CD8-positive, alpha-beta T cell (primary cell): ENCODE measurements at regions of chr10 and their contacts with region 1.

Region 1: GRCh38 chr10:11557513-11557912 is 53.9 kb downstream of the USP6NL start:
- DNase-seq: no peak
- ATAC-seq: no peak
- H3K4me3 ChIP-seq: no peak overlapping the region
- H3K4me3 Mint-ChIP-seq: no peak overlapping the region
- H3K27ac ChIP-seq: no peak overlapping the region
- H3K27ac Mint-ChIP-seq: no peak overlapping the region
- H3K4me1 ChIP-seq: no peaks in the 10 kb centered on the region
- H3K4me1 Mint-ChIP-seq: peaks cover 12% of the 10 kb centered on the region
- H3K27me3 ChIP-seq: no peaks in the 10 kb centered on the region
- H3K27me3 Mint-ChIP-seq: no peaks in the 10 kb centered on the region
- CTCF ChIP-seq: no peak

Region 2: GRCh38 chr10:11397980-11398580 is 159.4 kb before region 1 on chr10:
- CTCF ChIA-PET with region 1: no interaction called
- POLR2A ChIA-PET with region 1: no interaction called
- intact Hi-C with region 1: no loop called
- DNase-seq: no peak
- ATAC-seq: no peak
- H3K4me3 ChIP-seq: no peak overlapping the region
- H3K4me3 Mint-ChIP-seq: no peak overlapping the region
- H3K27ac ChIP-seq: no peak overlapping the region
- H3K27ac Mint-ChIP-seq: no peak overlapping the region
- H3K4me1 ChIP-seq: peaks cover 30% of the 10 kb centered on the region
- H3K4me1 Mint-ChIP-seq: peaks cover 57% of the 10 kb centered on the region
- H3K27me3 ChIP-seq: no peaks in the 10 kb centered on the region
- H3K27me3 Mint-ChIP-seq: no peaks in the 10 kb centered on the region
- CTCF ChIP-seq: no peak

Region 3: GRCh38 chr10:11581213-11581612 is 23.7 kb after region 1 on chr10:
- CTCF ChIA-PET with region 1: no interaction called
- POLR2A ChIA-PET with region 1: no interaction called
- intact Hi-C with region 1: no loop called
- DNase-seq: no peak
- ATAC-seq: no peak
- H3K4me3 ChIP-seq: no peak overlapping the region
- H3K4me3 Mint-ChIP-seq: no peak overlapping the region
- H3K27ac ChIP-seq: no peak overlapping the region
- H3K27ac Mint-ChIP-seq: no peak overlapping the region
- H3K4me1 ChIP-seq: peaks cover 10% of the 10 kb centered on the region
- H3K4me1 Mint-ChIP-seq: peaks cover 25% of the 10 kb centered on the region
- H3K27me3 ChIP-seq: no peaks in the 10 kb centered on the region
- H3K27me3 Mint-ChIP-seq: no peaks in the 10 kb centered on the region
- CTCF ChIP-seq: no peak

Region 4: GRCh38 chr10:11595395-11595692 is 37.8 kb after region 1 on chr10:
- CTCF ChIA-PET with region 1: no interaction called
- POLR2A ChIA-PET with region 1: no interaction called
- intact Hi-C with region 1: loop called in 1 of 2 experiments (anchors 5 kb)
- DNase-seq: no peak
- ATAC-seq: no peak
- H3K4me3 ChIP-seq: no peak overlapping the region
- H3K4me3 Mint-ChIP-seq: no peak overlapping the region
- H3K27ac ChIP-seq: no peak overlapping the region
- H3K27ac Mint-ChIP-seq: no peak overlapping the region
- H3K4me1 ChIP-seq: no peaks in the 10 kb centered on the region
- H3K4me1 Mint-ChIP-seq: peaks cover 3% of the 10 kb centered on the region
- H3K27me3 ChIP-seq: no peaks in the 10 kb centered on the region
- H3K27me3 Mint-ChIP-seq: no peaks in the 10 kb centered on the region
- CTCF ChIP-seq: no peak